Activated CD4-positive, alpha-beta T cell treated with anti-CD3 and anti-CD28 coated beads, Interleukin-2, amount 10 ng/mL, durations not matched to agents 24 days and 14 days (primary cell): ENCODE measurements at regions of chr7 and their contacts with region 1.

Region 1: DNA sequence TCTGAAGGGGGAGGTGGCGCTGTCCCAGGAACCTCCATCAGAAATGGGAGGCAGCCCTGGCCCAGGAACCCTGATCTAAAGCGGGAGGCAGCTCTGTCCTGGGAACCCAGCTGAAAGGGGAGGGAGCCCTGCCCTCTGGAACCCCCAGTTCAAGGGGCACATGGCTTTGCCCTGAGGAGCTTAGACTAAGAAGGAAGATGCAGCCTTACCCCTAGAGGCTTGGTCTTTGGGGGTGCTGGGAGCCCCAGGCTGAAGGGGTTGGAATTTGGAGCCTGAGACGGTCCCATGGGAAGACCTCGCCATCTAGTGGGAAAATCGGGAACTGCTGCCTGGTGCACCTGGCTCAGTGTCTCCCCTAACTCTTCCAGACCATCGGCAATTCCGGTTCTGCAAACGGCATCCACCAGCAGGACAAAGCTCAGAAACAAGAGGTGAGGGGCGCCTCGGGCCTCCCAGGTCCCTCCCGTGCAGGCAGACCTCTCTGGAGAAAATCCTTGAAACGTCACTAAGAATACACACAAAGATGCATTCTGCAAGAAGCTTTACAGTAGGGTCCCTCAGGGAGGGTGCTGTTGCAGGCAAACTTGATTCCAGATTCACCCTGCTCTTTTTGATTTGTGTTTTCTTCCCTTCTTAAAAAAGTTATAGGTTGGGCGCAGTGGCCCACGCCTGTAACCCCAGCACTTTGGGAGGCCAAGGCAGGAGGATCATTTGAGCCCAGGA is 52.4 kb upstream of the GTF2IRD1 start:
- DNase-seq: peak; percentile 92
- H3K4me3 Mint-ChIP-seq: no peak overlapping the region
- H3K27ac Mint-ChIP-seq: no peak overlapping the region
- H3K4me1 Mint-ChIP-seq: peaks cover 2% of the 10 kb centered on the region
- H3K27me3 Mint-ChIP-seq: no peaks in the 10 kb centered on the region

Region 2: DNA sequence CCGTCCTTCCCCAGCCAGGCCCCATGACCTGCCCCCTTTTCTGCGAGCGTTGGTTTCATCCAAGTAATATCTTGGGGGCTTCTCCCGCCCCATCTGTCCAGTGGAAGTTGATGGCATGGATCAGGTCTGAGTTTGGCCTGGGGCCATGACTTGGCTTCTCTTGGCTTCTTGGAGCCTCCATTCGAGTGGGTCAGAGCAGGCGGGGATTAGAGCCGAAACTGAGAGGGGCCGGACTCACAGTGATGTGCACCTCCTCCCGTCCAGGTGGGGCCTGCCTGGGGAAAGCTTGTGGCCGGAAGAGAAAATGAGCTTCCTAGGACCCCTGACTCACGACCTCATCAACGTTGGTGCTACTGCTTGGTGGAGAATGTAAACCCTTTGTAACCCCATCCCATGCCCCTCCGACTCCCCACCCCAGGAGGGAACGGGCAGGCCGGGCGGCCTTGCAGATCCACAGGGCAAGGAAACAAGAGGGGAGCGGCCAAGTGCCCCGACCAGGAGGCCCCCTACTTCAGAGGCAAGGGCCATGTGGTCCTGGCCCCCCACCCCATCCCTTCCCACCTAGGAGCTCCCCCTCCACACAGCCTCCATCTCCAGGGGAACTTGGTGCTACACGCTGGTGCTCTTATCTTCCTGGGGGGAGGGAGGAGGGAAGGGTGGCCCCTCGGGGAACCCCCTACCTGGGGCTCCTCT is 332.8 kb before region 1 on chr7:
- intact Hi-C with region 1: loop called (anchors 1 kb)
- DNase-seq: no peak
- H3K4me3 Mint-ChIP-seq: no peak overlapping the region
- H3K27ac Mint-ChIP-seq: peak overlapping the region; percentile 5
- H3K4me1 Mint-ChIP-seq: peaks cover 7% of the 10 kb centered on the region
- H3K27me3 Mint-ChIP-seq: no peaks in the 10 kb centered on the region

Region 3: GRCh38 chr7:74206589-74207120 is 194.6 kb before region 1 on chr7:
- intact Hi-C with region 1: loop called (anchors 1 kb)
- DNase-seq: peak; percentile 95
- H3K4me3 Mint-ChIP-seq: peak overlapping the region; percentile 51
- H3K27ac Mint-ChIP-seq: no peak overlapping the region
- H3K4me1 Mint-ChIP-seq: peaks cover 21% of the 10 kb centered on the region
- H3K27me3 Mint-ChIP-seq: no peaks in the 10 kb centered on the region

Region 4: DNA sequence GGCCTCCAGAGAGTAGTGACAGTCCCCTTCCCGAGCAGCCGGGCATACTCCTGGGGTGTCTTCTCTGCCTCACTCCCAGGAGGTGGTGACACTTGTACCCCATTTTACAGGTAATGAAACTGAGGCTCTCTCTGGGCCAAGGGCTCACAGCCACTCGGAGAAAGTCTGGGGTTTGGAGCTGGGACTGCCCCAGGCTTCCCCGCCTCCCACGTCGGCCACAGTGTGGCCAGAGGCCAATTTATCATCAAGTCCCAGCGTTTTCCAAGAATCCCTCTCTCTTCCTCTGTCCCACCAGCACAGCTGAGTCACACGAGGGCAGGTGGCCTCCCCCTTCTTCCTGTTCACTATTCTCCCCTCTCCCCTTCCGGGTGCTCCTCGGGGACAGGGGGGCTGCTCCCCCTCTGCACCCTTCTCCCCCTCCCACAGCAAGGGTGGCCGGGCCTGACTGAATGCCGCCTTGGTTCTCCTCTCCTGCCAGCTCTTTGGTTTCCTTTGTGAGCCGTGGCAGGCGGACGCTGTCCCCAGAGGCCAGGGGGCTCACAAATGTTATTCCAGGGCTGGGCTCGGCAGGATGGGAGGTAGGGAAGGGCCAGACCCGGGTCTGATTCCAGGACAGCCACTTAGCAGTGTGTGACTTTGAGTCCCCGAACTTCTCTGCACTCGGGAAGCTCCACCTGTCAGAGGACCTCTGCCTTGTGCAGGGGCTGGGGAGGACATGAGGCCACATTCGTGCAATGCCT is 94.4 kb before region 1 on chr7:
- intact Hi-C with region 1: loop called (anchors 10 kb)
- DNase-seq: no peak
- H3K4me3 Mint-ChIP-seq: peak overlapping the region; percentile 15
- H3K27ac Mint-ChIP-seq: no peak overlapping the region
- H3K4me1 Mint-ChIP-seq: peaks cover 12% of the 10 kb centered on the region
- H3K27me3 Mint-ChIP-seq: peaks cover 15% of the 10 kb centered on the region

Region 5: DNA sequence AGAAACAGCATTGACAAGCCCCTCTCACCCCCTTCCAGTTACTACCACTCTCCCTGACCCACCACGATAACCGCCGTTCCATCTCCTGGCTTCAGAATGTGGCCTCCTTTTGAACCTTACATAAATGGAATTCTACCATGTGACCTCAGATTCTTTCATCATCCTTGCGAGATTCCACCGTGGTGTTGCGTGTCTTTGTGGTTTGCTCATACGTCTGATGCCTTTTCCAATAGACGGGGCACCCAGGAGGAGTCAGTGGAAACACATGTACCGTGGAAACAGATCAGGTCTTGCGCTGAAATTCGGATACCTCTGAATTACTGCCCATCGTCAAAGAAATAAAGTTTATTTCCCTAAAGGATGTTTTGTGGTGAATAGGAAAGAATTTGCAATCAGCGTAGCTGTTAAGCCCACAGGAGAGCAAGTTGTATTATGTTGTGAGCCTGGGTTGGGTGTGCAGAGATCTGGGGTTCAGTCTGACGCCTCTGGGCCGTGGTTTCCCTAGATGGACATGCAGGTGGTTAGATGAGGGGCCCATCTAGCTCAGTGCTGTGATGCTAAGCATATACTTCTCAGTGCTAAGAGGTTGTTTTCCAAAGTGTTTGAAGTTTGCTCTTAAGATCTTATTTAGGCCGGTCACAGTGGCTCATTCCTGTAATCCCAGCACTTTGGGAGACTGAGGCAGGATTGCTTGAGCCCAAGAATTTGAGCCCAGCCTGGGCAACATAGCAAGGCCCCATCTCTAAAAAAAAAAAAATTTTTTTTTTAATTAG is 81.5 kb after region 1 on chr7:
- intact Hi-C with region 1: no loop called
- DNase-seq: no peak
- H3K4me3 Mint-ChIP-seq: no peak overlapping the region
- H3K27ac Mint-ChIP-seq: no peak overlapping the region
- H3K4me1 Mint-ChIP-seq: no peaks in the 10 kb centered on the region
- H3K27me3 Mint-ChIP-seq: peaks cover 2% of the 10 kb centered on the region